Naive thymus-derived CD4-positive, alpha-beta T cell (primary cell): ENCODE measurements at regions of chrX and their contacts with region 1.

Region 1: GRCh38 chrX:110317820-110318658 is at the start of gene AMMECR1:
- DNase-seq: peak; percentile 73 to 84 (median 78)
- ATAC-seq: peak; percentile 97
- H3K4me3 ChIP-seq: peak within 1 kb of the TSS; percentile 83
- H3K4me3 Mint-ChIP-seq: peak within 1 kb of the TSS; percentile 88 to 95 (median 93)
- H3K27ac ChIP-seq: peak within 1 kb of the TSS; percentile 92
- H3K27ac Mint-ChIP-seq: peak within 1 kb of the TSS; percentile 87 to 97 (median 94)
- H3K4me1 ChIP-seq: peaks cover 0 to 6% of the 10 kb centered on the region in 2 donors
- H3K4me1 Mint-ChIP-seq: peaks cover 6 to 31% (median 22%) of the 10 kb centered on the region in 7 donors
- H3K27me3 ChIP-seq: no peaks in the 10 kb centered on the region
- H3K27me3 Mint-ChIP-seq: peaks cover 0 to 14% (median 0%) of the 10 kb centered on the region in 5 donors
- total RNA-seq, gene AMMECR1: 11.6 to 16.7 (median 15.3) TPM

Region 2: DNA sequence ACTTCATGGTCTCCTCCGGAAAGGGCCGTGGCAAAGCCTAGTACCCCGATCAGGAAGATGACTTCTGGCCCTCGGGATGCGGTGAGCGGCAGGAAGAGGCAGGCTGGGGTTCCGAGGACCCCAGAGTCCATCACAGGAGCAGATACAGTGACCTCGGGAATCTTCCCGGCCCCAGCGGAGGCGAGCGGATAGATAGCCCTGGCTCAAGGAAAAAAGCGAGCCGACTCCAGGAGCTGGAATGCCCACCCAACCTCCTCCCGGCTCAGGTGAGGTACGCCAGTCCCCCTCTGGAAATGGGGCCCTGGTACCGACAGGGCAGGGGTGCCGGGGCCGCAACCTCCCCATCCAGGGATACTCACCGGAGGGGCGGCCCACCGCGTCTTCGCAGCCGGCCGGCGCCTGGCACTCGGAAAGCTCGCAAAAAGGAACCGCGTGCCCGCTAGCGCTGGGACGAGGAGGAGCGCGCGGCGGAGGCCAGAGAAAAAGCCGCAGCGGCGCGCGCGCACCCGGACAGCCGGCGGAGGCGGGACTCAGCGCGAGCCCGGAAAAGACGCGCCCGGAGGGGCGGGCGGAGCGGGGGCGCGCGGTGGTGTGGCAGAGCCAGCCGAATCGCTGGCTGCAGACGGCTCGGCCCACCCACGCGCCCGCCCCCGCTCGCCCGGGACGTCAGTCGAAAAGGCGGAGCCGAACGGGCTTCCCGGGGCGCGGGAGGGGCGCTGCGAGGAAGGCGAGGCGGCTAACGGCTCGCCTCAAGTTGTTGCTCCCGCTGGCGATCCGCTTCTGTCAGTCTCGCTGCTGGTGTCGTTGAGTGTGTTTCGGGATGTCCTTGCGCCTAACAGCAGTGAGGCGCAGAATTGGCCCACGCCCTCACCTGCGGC is 585.0 kb before region 1 on chrX and contains the start of gene ACSL4:
- CTCF ChIA-PET with region 1: no interaction called
- POLR2A ChIA-PET with region 1: interaction called, 5 read pairs
- intact Hi-C with region 1: loop called in 1 of 2 experiments (anchors 1 kb)
- DNase-seq: peak; percentile 74 to 89 (median 84)
- ATAC-seq: peak; percentile 97
- H3K4me3 ChIP-seq: peak within 1 kb of the TSS; percentile 92
- H3K4me3 Mint-ChIP-seq: peak within 1 kb of the TSS; percentile 93 to 97 (median 96)
- H3K27ac ChIP-seq: peak within 1 kb of the TSS; percentile 86
- H3K27ac Mint-ChIP-seq: peak within 1 kb of the TSS; percentile 92 to 98 (median 94)
- H3K4me1 ChIP-seq: peaks cover 4 to 6% of the 10 kb centered on the region in 2 donors
- H3K4me1 Mint-ChIP-seq: peaks cover 13 to 36% (median 26%) of the 10 kb centered on the region in 7 donors
- H3K27me3 ChIP-seq: no peaks in the 10 kb centered on the region
- H3K27me3 Mint-ChIP-seq: no peaks in the 10 kb centered on the region
- total RNA-seq, gene ACSL4: 13.4 to 43.9 (median 21.6) TPM

Region 3: GRCh38 chrX:110156167-110156754 is 161.8 kb before region 1 on chrX:
- CTCF ChIA-PET with region 1: interaction called, 3 read pairs
- POLR2A ChIA-PET with region 1: interaction called, 3 read pairs
- intact Hi-C with region 1: loop called (anchors 2 kb)
- DNase-seq: peak in 3 of 9 donors; percentile 22 to 27 (median 27)
- ATAC-seq: no peak
- H3K4me3 ChIP-seq: no peak overlapping the region
- H3K4me3 Mint-ChIP-seq: no peak overlapping the region
- H3K27ac ChIP-seq: no peak overlapping the region
- H3K27ac Mint-ChIP-seq: no peak overlapping the region
- H3K4me1 ChIP-seq: no peaks in the 10 kb centered on the region
- H3K4me1 Mint-ChIP-seq: peaks cover 5 to 14% (median 10%) of the 10 kb centered on the region in 7 donors
- H3K27me3 ChIP-seq: no peaks in the 10 kb centered on the region
- H3K27me3 Mint-ChIP-seq: no peaks in the 10 kb centered on the region

Region 4: GRCh38 chrX:110188756-110189558 is 129.1 kb before region 1 on chrX:
- CTCF ChIA-PET with region 1: no interaction called
- POLR2A ChIA-PET with region 1: no interaction called
- intact Hi-C with region 1: loop called in 1 of 2 experiments (anchors 2 kb)
- DNase-seq: peak in 1 of 9 donors; percentile 4
- ATAC-seq: no peak
- H3K4me3 ChIP-seq: no peak overlapping the region
- H3K4me3 Mint-ChIP-seq: peak overlapping the region in 9 of 10 donors; percentile 3 to 42 (median 20)
- H3K27ac ChIP-seq: peak overlapping the region; percentile 14
- H3K27ac Mint-ChIP-seq: peak overlapping the region; percentile 27 to 75 (median 71)
- H3K4me1 ChIP-seq: peaks cover 4 to 7% of the 10 kb centered on the region in 2 donors
- H3K4me1 Mint-ChIP-seq: peaks cover 7 to 24% (median 15%) of the 10 kb centered on the region in 7 donors
- H3K27me3 ChIP-seq: no peaks in the 10 kb centered on the region
- H3K27me3 Mint-ChIP-seq: no peaks in the 10 kb centered on the region

Region 5: GRCh38 chrX:110226931-110227330 is 91.1 kb before region 1 on chrX:
- CTCF ChIA-PET with region 1: interaction called, 4 read pairs
- POLR2A ChIA-PET with region 1: interaction called, 29 read pairs
- intact Hi-C with region 1: loop called (anchors 1 to 2 kb)
- DNase-seq: no peak
- ATAC-seq: no peak
- H3K4me3 ChIP-seq: no peak overlapping the region
- H3K4me3 Mint-ChIP-seq: no peak overlapping the region
- H3K27ac ChIP-seq: no peak overlapping the region
- H3K27ac Mint-ChIP-seq: peak overlapping the region in 4 of 9 donors; percentile 6 to 90 (median 69)
- H3K4me1 ChIP-seq: peaks cover 6% of the 10 kb centered on the region in 2 donors
- H3K4me1 Mint-ChIP-seq: peaks cover 7 to 52% (median 33%) of the 10 kb centered on the region in 7 donors
- H3K27me3 ChIP-seq: no peaks in the 10 kb centered on the region
- H3K27me3 Mint-ChIP-seq: no peaks in the 10 kb centered on the region

Region 6: GRCh38 chrX:110412971-110413721 is 95.1 kb after region 1 on chrX:
- CTCF ChIA-PET with region 1: no interaction called
- POLR2A ChIA-PET with region 1: no interaction called
- intact Hi-C with region 1: loop called (anchors 2 to 5 kb)
- DNase-seq: peak; percentile 25 to 66 (median 56)
- ATAC-seq: peak; percentile 91
- H3K4me3 ChIP-seq: no peak overlapping the region
- H3K4me3 Mint-ChIP-seq: no peak overlapping the region
- H3K27ac ChIP-seq: no peak overlapping the region
- H3K27ac Mint-ChIP-seq: peak overlapping the region in 1 of 9 donors; percentile 16
- H3K4me1 ChIP-seq: no peaks in the 10 kb centered on the region
- H3K4me1 Mint-ChIP-seq: peaks cover 0 to 6% (median 0%) of the 10 kb centered on the region in 7 donors
- H3K27me3 ChIP-seq: no peaks in the 10 kb centered on the region
- H3K27me3 Mint-ChIP-seq: peaks cover 0 to 4% (median 0%) of the 10 kb centered on the region in 5 donors